Activated naive CD4-positive, alpha-beta T cell treated with anti-CD3 and anti-CD28 coated beads for 36 hours (primary cell): ENCODE measurements at regions of chr10 and their contacts with region 1.

Region 1: DNA sequence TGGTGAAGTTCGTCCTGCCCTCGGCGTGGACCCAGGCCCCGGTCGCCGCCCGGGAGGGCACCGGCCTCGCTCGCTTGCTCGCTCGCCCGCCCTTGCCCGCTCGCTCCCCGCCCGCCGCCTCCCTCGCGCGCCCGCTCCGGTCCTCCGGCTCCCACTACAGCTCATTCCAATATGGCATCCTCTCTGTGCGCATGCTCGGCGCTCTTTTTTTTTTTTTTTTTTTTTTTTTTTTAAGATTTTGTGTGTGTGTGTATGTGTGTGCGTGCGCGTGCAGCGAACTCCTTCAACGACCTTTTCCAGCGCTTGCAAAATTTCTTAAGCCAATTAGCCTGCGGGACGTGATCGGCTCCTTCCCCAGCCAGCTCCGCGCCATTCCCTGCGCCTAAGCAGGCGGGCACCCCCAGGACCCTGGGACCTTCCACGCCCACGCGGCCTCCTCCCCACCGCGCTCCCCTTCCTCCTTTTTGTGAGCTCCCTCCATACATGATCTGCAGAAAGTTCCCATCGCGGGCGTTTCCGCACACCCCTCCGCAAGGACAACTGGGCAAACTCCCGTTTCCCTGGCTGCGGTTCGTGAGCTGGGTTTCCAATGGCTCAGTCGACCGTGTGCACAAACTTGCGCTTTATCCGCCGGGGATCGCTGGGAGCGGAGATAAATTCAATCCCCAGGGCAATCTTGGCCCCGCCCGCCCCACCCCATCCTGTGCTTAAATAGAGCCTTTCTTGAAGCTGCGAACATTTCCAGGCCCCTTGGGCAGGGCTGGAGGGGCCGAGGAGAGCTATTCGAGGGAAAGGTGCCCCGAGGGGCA is at the start of gene SFMBT2:
- DNase-seq: peak; percentile 73
- H3K4me3 Mint-ChIP-seq: peak within 1 kb of the TSS; percentile 97
- H3K27ac Mint-ChIP-seq: peak within 1 kb of the TSS; percentile 92
- H3K4me1 Mint-ChIP-seq: peaks cover 32% of the 10 kb centered on the region
- H3K27me3 Mint-ChIP-seq: peaks cover 15% of the 10 kb centered on the region
- total RNA-seq, gene SFMBT2: 20.0 to 21.5 TPM

Region 2: DNA sequence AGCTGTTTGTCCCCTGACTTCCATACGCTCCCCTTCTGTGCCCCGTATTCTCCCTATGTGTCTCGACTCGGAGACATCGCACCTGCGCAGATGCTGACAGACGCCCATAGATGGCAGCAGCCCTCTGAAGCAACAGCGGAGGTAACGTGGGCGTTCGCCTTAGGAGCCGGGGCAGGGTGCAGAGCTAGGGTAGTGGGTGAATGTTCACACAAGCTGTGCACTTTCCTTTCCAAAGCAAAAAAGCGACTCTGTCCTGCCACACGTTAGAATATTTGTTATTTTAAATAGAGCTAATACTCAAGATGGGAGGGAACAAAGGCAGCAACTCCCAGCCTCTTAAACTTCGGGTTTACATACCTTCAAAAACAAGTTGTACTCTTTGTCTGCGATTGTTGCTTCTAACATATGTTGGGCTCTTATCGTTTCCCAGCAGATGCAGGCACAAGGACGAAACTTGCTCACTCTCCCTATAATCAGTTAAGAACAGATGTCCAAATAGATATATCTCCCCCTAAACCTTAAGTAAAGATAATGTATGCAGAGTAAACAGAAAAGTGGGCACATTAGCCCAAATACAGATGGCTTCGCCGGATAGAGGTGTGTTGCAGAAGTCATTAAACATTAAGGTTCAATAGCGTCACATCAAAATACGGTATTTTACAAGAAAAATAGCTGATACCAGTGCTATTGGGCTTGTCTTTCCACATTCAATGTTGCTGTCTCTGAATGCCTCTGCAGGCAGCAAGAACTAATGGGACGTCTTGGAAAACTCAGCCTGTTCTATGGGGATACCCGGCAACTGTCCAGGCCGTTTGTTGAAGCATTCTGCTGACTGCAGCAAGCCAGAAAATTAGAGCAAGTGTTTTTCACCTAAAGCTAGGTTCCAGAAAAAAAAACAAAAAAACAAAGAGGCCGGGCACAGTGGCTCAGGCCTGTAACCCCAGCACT is 490.7 kb before region 1 on chr10:
- CTCF ChIA-PET with region 1: interaction called, 68 read pairs
- intact Hi-C with region 1: loop called (anchors 1 kb)
- DNase-seq: peak; percentile 90
- H3K4me3 Mint-ChIP-seq: no peak overlapping the region
- H3K27ac Mint-ChIP-seq: no peak overlapping the region
- H3K4me1 Mint-ChIP-seq: peaks cover 13% of the 10 kb centered on the region
- H3K27me3 Mint-ChIP-seq: no peaks in the 10 kb centered on the region

Region 3: DNA sequence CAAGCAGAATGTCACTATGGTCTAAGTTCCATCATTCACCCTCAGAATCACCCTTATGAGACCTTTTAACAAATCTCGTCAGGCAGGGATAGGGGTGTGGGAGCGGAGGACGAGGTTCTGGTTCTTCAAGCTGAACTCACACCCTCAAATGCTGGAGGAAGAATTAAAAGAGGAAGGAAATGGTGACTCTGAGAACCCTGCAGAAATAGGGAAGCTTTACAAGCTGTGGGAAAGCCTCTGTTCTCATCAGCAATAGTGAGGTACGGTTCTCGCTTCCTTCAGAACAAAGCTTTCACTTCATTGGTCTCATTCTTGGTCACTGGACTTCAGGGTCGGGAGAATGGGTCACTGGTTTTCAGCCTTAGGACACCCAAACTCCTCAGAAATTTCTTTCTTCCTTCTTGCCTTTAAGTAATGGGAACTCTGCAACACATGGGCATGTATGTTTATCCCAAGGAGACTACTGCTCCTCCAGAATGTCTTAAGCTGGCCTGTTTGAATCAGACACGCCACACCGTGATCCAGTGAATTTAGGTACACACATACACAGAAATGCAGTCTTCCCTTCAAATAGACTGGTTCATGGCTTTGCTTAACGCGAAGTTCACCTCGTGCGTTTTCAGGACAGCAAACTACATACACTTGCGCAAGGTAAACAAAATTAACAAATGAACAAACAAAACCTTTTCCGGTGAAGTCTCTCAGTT is 226.3 kb before region 1 on chr10:
- CTCF ChIA-PET with region 1: interaction called, 7 read pairs
- intact Hi-C with region 1: loop called (anchors 1 kb)
- DNase-seq: no peak
- H3K4me3 Mint-ChIP-seq: peak overlapping the region; percentile 1
- H3K27ac Mint-ChIP-seq: peak overlapping the region; percentile 81
- H3K4me1 Mint-ChIP-seq: peaks cover 52% of the 10 kb centered on the region
- H3K27me3 Mint-ChIP-seq: no peaks in the 10 kb centered on the region

Region 4: GRCh38 chr10:7269988-7270387 is 141.1 kb before region 1 on chr10:
- CTCF ChIA-PET with region 1: interaction called, 3 read pairs
- intact Hi-C with region 1: loop called (anchors 1 kb)
- DNase-seq: no peak
- H3K4me3 Mint-ChIP-seq: peak overlapping the region; percentile 22
- H3K27ac Mint-ChIP-seq: peak overlapping the region; percentile 86
- H3K4me1 Mint-ChIP-seq: peaks cover 69% of the 10 kb centered on the region
- H3K27me3 Mint-ChIP-seq: no peaks in the 10 kb centered on the region

Region 5: DNA sequence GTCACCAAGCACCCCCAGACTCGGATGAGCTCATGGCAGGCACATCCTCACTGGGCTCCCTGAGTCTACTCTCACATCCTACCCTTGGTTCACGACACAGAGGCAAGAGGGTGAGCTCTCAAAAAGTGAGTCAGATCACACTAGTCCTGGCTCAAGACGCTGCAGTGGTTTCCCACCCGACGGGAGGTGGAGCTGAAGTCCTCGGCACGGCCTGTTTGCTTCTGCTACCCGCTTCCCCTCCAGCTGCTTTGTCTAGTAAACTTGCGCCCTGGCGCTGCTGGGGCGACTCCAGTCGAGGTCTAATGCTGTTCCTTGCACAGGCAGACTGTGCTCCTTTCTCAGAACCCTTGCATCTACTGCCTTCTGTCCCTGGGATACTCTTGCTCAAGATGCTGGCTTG is 13.2 kb after region 1 on chr10:
- CTCF ChIA-PET with region 1: no interaction called
- intact Hi-C with region 1: no loop called
- DNase-seq: peak; percentile 44
- H3K4me3 Mint-ChIP-seq: no peak overlapping the region
- H3K27ac Mint-ChIP-seq: no peak overlapping the region
- H3K4me1 Mint-ChIP-seq: peaks cover 16% of the 10 kb centered on the region
- H3K27me3 Mint-ChIP-seq: no peaks in the 10 kb centered on the region

Region 6: DNA sequence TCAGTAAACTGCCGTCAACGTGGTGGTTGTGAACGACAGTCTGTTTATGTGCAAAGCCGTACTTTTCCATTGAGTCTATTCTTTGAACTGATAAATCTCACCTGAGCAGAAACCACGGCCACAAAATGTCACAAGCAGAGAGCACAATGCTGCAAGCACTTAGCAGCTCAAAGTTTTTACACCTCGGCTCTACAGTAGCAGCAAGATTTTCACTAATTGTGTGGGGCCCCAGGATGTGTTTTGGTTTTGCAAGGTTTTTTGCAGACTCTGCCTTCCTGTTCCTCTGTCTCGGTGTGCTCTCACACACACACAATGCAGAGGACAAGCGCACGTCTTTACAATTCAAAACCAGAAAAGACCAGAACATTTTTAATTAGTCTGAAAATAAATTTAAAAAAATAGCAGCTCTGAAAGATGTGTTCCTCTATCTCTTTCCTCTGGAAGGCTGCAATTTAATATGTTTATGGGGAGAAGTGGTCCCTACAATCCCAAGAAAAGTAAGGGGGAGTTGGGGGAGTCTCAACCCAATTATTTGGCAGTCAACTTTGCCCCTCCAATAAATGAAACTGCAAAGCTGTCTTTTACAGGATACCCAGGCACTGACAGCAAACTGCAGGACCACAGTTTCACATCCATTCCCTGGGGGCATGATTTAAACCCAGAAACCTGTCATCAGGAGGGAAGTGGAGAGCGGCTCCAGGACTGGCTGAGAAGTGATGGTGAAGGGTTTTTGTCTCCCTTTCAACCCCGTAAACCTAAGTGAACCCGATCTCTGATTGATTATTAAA is 73.6 kb after region 1 on chr10:
- CTCF ChIA-PET with region 1: no interaction called
- intact Hi-C with region 1: loop called (anchors 1 kb)
- DNase-seq: peak; percentile 76
- H3K4me3 Mint-ChIP-seq: peak overlapping the region; percentile 60
- H3K27ac Mint-ChIP-seq: peak overlapping the region; percentile 71
- H3K4me1 Mint-ChIP-seq: peaks cover 76% of the 10 kb centered on the region
- H3K27me3 Mint-ChIP-seq: no peaks in the 10 kb centered on the region